Lower lobe of right lung (tissue), 2 donors: ENCODE measurements at regions of chr2 and their contacts with region 1.

Region 1: GRCh38 chr2:10204326-10205161 is 82.0 kb downstream of the RRM2 start:
- DNase-seq: peak; percentile 40
- ATAC-seq: no peak
- H3K4me3 ChIP-seq: no peak overlapping the region
- H3K27ac ChIP-seq: no peak overlapping the region
- H3K4me1 ChIP-seq: no peaks in the 10 kb centered on the region
- H3K27me3 ChIP-seq: no peaks in the 10 kb centered on the region
- CTCF ChIP-seq: no peak

Region 2: GRCh38 chr2:10312437-10312957 is 108.0 kb after region 1 on chr2:
- intact Hi-C with region 1: loop called (anchors 5 kb)
- DNase-seq: no peak
- ATAC-seq: no peak
- H3K4me3 ChIP-seq: no peak overlapping the region
- H3K27ac ChIP-seq: no peak overlapping the region
- H3K4me1 ChIP-seq: peaks cover 25% of the 10 kb centered on the region
- H3K27me3 ChIP-seq: no peaks in the 10 kb centered on the region
- CTCF ChIP-seq: no peak